Activated naive CD4-positive, alpha-beta T cell treated with anti-CD3 and anti-CD28 coated beads, Interleukin-2, amount 10 ng/mL, durations not matched to agents 7 days and 5 days (primary cell): ENCODE measurements at regions of chr6 and their contacts with region 1.

Region 1: DNA sequence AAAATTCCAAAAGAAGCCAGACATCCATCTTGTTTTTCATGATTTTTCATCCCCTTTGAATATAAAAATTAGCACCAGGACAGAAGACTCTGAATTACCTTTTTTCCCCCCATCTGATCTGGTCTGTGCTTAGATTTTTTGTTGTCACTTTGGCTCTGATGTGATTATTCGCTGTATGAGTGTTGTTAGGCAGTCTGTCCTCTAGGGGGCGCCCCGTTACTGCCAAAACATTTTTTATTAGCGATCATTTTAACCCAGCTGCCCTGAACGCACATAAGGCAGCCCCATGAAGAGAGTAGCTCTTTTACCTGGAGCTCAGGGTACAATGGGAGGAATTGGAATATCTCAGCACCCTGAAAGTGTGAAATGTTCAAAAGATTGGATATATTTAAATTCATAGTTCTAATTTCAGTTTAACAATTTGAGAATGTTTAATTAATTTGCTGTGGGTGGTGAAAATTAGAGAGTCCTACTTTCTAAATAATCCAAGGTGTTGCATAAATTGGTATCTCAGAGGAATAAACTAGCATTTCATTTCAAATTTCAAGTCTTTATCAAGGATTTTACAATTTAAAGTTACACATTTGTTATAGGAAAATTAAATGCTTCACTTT is 60.8 kb downstream of the PRPH2 start:
- DNase-seq: peak; percentile 88
- H3K4me3 Mint-ChIP-seq: no peak overlapping the region
- H3K27ac Mint-ChIP-seq: no peak overlapping the region
- H3K4me1 Mint-ChIP-seq: no peaks in the 10 kb centered on the region
- H3K27me3 Mint-ChIP-seq: no peaks in the 10 kb centered on the region

Region 2: GRCh38 chr6:42692137-42692911 is 30.7 kb after region 1 on chr6:
- CTCF ChIA-PET with region 1: interaction called, 13 read pairs
- DNase-seq: no peak
- H3K4me3 Mint-ChIP-seq: no peak overlapping the region
- H3K27ac Mint-ChIP-seq: peak overlapping the region; percentile 22
- H3K4me1 Mint-ChIP-seq: peaks cover 50% of the 10 kb centered on the region
- H3K27me3 Mint-ChIP-seq: no peaks in the 10 kb centered on the region

Region 3: DNA sequence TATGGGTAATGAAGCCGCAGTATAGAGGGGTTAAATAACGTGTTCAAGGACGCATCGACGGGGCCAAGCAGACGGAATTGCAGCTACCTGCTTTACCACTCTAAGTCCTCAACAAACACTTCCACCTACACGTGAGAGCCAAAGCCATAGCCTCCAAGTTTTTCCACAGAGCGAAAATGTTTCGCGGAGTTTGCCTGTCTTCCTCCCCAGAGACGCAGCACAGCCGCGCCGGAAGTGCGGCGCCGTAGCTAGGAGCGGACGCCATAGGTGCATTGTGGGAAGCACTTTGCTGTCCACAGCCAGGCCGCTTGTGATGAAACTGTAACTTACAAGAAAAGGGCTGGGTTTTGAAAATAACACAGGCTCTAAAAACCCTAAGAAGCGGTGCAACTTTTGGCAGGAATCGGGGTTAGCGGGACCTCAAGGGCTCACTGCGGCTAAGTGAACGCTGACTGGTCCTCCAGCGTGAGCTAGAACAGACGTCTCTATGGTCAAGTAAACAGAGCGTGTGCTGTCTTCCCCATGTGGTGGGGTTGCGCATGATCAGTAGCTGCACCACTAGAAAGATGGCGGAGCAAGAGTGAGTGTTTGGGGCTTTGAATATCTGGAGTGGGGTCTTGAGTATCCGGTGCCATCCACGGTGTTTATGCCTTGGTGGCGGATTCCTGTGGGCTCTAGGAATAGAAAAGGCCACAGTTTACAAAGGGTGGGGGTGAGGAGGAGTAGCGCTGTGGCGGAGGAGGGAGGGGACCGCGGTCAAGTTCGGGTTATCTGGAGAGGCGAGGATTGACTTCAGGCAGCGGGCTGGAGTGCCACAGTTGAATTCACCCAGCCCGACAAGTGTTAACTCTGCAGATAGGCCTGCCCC is 218.0 kb after region 1 on chr6 and contains the start of gene RPL7L1:
- CTCF ChIA-PET with region 1: interaction called, 38 read pairs
- DNase-seq: peak; percentile 88
- H3K4me3 Mint-ChIP-seq: peak within 1 kb of the TSS; percentile 90
- H3K27ac Mint-ChIP-seq: peak within 1 kb of the TSS; percentile 95
- H3K4me1 Mint-ChIP-seq: peaks cover 42% of the 10 kb centered on the region
- H3K27me3 Mint-ChIP-seq: no peaks in the 10 kb centered on the region